Activated CD8-positive, alpha-beta T cell treated with anti-CD3 and anti-CD28 coated beads, Interleukin-2, amount 10 ng/mL, durations not matched to agents 7 days and 5 days (primary cell): ENCODE measurements at regions of chr7 and their contacts with region 1.

Region 1: GRCh38 chr7:128322040-128322643 is 21.6 kb downstream of the RBM28 start:
- DNase-seq: peak; percentile 70
- ATAC-seq: peak; percentile 68
- H3K4me3 Mint-ChIP-seq: no peak overlapping the region
- H3K27ac Mint-ChIP-seq: peak overlapping the region; percentile 90
- H3K4me1 Mint-ChIP-seq: peaks cover 44% of the 10 kb centered on the region
- H3K27me3 Mint-ChIP-seq: no peaks in the 10 kb centered on the region

Region 2: GRCh38 chr7:128209229-128210035 is 112.7 kb before region 1 on chr7:
- CTCF ChIA-PET with region 1: interaction called, 56 read pairs
- POLR2A ChIA-PET with region 1: no interaction called
- DNase-seq: peak; percentile 74
- ATAC-seq: peak; percentile 84
- H3K4me3 Mint-ChIP-seq: no peak overlapping the region
- H3K27ac Mint-ChIP-seq: no peak overlapping the region
- H3K4me1 Mint-ChIP-seq: no peaks in the 10 kb centered on the region
- H3K27me3 Mint-ChIP-seq: peaks cover 14% of the 10 kb centered on the region

Region 3: DNA sequence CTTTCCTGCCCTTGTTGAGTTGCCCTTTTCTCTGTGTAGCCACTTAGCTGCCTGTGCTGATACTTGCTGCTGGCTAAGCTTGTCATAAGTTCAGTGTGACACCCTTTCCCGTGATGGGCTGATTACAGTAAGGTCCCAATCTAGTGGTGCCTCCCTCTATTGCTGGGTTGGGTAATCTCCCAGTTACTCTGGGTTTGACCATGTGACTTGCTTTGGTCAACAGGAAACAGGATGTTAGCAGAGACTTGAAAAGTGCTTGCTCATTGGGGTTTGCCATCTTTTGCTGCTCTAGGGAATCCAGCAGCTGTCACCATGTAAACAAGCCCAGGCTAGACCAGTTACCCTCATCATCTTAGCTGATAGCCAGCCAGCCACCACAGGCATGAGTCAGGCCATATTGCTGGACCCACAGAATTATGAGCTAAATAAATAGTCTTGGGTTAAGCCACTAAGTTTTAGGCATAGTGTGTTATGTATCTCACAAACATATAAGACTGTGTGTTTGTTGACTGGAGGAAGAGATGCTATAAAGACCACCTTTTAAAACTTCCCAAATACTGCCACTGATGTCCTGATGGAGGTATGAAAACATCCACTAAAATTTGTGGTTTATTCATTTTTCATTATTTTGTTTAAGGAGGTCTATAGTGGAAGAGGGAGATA is 85.1 kb before region 1 on chr7:
- CTCF ChIA-PET with region 1: interaction called, 19 read pairs
- POLR2A ChIA-PET with region 1: no interaction called
- DNase-seq: peak; percentile 70
- ATAC-seq: peak; percentile 89
- H3K4me3 Mint-ChIP-seq: no peak overlapping the region
- H3K27ac Mint-ChIP-seq: peak overlapping the region; percentile 62
- H3K4me1 Mint-ChIP-seq: peaks cover 12% of the 10 kb centered on the region
- H3K27me3 Mint-ChIP-seq: peaks cover 14% of the 10 kb centered on the region

Region 4: GRCh38 chr7:128311013-128311412 is 11.1 kb before region 1 on chr7:
- CTCF ChIA-PET with region 1: interaction called, 17 read pairs
- POLR2A ChIA-PET with region 1: no interaction called
- DNase-seq: no peak
- ATAC-seq: no peak
- H3K4me3 Mint-ChIP-seq: no peak overlapping the region
- H3K27ac Mint-ChIP-seq: no peak overlapping the region
- H3K4me1 Mint-ChIP-seq: peaks cover 4% of the 10 kb centered on the region
- H3K27me3 Mint-ChIP-seq: no peaks in the 10 kb centered on the region

Region 5: DNA sequence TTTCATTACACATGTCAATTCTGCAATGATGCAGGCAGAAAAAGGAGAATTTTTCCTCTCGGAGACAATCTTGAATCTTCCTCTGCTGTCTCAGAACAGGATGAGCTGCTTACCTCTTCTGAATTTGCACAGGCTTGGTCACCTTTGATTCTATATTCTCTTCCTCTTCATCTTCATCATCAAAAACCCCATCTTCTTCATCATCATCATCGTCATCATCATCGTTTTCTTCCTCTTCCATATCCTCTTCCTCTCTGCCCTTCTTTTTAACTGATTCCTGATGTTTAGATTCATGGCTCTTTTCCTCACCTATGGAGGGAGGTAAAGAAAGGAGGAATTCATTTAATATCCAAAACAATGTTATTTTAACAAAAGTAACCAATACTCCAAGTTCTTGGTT is 13.6 kb after region 1 on chr7:
- CTCF ChIA-PET with region 1: interaction called, 22 read pairs
- POLR2A ChIA-PET with region 1: no interaction called
- DNase-seq: no peak
- ATAC-seq: no peak
- H3K4me3 Mint-ChIP-seq: no peak overlapping the region
- H3K27ac Mint-ChIP-seq: no peak overlapping the region
- H3K4me1 Mint-ChIP-seq: peaks cover 1% of the 10 kb centered on the region
- H3K27me3 Mint-ChIP-seq: no peaks in the 10 kb centered on the region

Region 6: GRCh38 chr7:128343554-128344430 is 21.6 kb after region 1 on chr7 and contains the start of gene RBM28:
- CTCF ChIA-PET with region 1: interaction called, 20 read pairs
- POLR2A ChIA-PET with region 1: no interaction called
- DNase-seq: peak; percentile 90
- ATAC-seq: peak; percentile 98
- H3K4me3 Mint-ChIP-seq: peak within 1 kb of the TSS; percentile 91
- H3K27ac Mint-ChIP-seq: peak within 1 kb of the TSS; percentile 93
- H3K4me1 Mint-ChIP-seq: peaks cover 23% of the 10 kb centered on the region
- H3K27me3 Mint-ChIP-seq: peaks cover 12% of the 10 kb centered on the region
- total RNA-seq, gene RBM28: 40.4 to 43.3 TPM

Region 7: GRCh38 chr7:128497405-128497804 is 175.3 kb after region 1 on chr7:
- CTCF ChIA-PET with region 1: no interaction called
- POLR2A ChIA-PET with region 1: no interaction called
- DNase-seq: no peak
- ATAC-seq: no peak
- H3K4me3 Mint-ChIP-seq: no peak overlapping the region
- H3K27ac Mint-ChIP-seq: no peak overlapping the region
- H3K4me1 Mint-ChIP-seq: no peaks in the 10 kb centered on the region
- H3K27me3 Mint-ChIP-seq: no peaks in the 10 kb centered on the region